ENCODE measurements at regions of chr6 and their contacts with region 1.

Region 1: GRCh38 chr6:129871221-129871620 is 10.1 kb upstream of the TMEM244 start:
- DNase-seq: no peak
- ATAC-seq: no peak
- H3K4me3 ChIP-seq: no peak overlapping the region
- H3K4me3 Mint-ChIP-seq: no peak overlapping the region
- H3K27ac ChIP-seq: no peak overlapping the region
- H3K27ac Mint-ChIP-seq: no peak overlapping the region
- H3K4me1 ChIP-seq: no peaks in the 10 kb centered on the region
- H3K4me1 Mint-ChIP-seq: peaks cover 10% of the 10 kb centered on the region
- H3K27me3 ChIP-seq: no peaks in the 10 kb centered on the region
- H3K27me3 Mint-ChIP-seq: no peaks in the 10 kb centered on the region
- CTCF ChIP-seq: no peak

Region 2: GRCh38 chr6:129186988-129187387 is 684.2 kb before region 1 on chr6:
- CTCF ChIA-PET with region 1: no interaction called
- POLR2A ChIA-PET with region 1: no interaction called
- intact Hi-C with region 1: no loop called
- DNase-seq: no peak
- ATAC-seq: no peak
- H3K4me3 ChIP-seq: no peak overlapping the region
- H3K4me3 Mint-ChIP-seq: no peak overlapping the region
- H3K27ac ChIP-seq: no peak overlapping the region
- H3K27ac Mint-ChIP-seq: no peak overlapping the region
- H3K4me1 ChIP-seq: no peaks in the 10 kb centered on the region
- H3K4me1 Mint-ChIP-seq: no peaks in the 10 kb centered on the region
- H3K27me3 ChIP-seq: no peaks in the 10 kb centered on the region
- H3K27me3 Mint-ChIP-seq: peaks cover 10% of the 10 kb centered on the region
- CTCF ChIP-seq: no peak

Region 3: DNA sequence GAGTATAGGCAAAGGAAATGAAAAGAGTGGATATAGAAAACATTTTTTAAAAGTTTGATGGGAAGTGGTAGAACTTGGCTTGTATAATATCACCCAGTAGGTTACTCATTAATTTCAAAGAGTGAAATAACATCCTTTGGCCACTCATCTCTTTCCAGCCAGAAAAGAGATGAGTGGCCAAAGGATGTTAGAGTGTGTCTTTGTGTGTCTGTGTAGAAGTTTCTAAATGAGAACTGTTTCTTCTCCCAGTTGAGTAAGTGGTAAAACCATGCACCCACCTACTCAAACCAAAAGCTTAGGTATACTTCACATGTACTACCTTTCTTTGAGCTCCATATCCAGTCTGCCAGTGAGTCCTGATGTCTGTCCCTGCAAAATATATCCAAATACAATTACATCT is 37.6 kb after region 1 on chr6:
- CTCF ChIA-PET with region 1: no interaction called
- POLR2A ChIA-PET with region 1: no interaction called
- intact Hi-C with region 1: loop called in 1 of 2 experiments (anchors 1 kb)
- DNase-seq: no peak
- ATAC-seq: no peak
- H3K4me3 ChIP-seq: no peak overlapping the region
- H3K4me3 Mint-ChIP-seq: no peak overlapping the region
- H3K27ac ChIP-seq: no peak overlapping the region
- H3K27ac Mint-ChIP-seq: no peak overlapping the region
- H3K4me1 ChIP-seq: no peaks in the 10 kb centered on the region
- H3K4me1 Mint-ChIP-seq: no peaks in the 10 kb centered on the region
- H3K27me3 ChIP-seq: no peaks in the 10 kb centered on the region
- H3K27me3 Mint-ChIP-seq: no peaks in the 10 kb centered on the region
- CTCF ChIP-seq: no peak